ENCODE measurements at regions of chr18 and their contacts with region 1.

Region 1: GRCh38 chr18:839224-840022 is 27.4 kb upstream of the YES1 start:
- DNase-seq: peak; percentile 93
- ATAC-seq: peak; percentile 98
- H3K4me3 Mint-ChIP-seq: no peak overlapping the region
- H3K27ac Mint-ChIP-seq: no peak overlapping the region
- H3K4me1 Mint-ChIP-seq: peaks cover 5% of the 10 kb centered on the region
- H3K27me3 Mint-ChIP-seq: peaks cover 6% of the 10 kb centered on the region

Region 2: DNA sequence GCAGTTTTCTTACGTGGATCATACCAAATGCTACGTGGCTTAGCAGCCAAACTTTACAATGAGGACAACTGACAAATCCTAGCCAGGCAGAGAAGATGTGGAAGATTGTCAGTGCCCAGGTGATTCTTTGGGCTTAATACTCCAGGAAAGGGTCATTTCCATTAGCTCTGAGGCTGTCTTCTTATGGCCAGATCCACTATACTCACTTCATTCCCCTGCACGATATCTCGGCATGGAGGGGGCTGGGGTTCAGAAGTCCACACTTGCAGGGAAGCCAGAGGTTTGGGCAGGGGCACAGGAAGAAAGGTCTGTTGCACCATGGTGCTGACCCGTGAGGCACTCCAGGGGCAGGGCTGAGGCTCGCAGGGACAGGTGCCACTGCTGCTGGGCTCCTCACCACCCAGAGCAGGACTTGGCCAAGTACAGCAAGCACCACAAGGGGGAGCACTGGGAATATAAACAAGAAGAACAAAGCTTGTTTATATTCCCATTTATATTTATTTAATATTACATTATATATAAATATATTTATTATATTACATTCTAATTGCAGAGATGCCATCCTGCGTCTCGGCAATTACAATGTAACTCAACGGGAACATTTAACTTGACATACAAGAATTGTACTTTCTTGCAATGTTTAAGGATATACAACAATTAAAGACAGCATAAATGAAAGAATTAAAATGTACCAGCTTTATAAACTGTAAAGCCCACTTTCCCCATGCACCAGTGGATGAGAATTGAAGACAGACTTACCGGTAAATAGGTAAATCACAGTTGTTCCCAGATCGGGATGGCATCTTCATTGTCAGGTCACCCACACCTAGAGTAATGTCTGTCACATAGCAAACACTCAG is 215.4 kb before region 1 on chr18:
- CTCF ChIA-PET with region 1: interaction called, 104 read pairs
- POLR2A ChIA-PET with region 1: interaction called, 4 read pairs
- DNase-seq: peak; percentile 80
- ATAC-seq: peak; percentile 89
- H3K4me3 Mint-ChIP-seq: no peak overlapping the region
- H3K27ac Mint-ChIP-seq: no peak overlapping the region
- H3K4me1 Mint-ChIP-seq: peaks cover 2% of the 10 kb centered on the region
- H3K27me3 Mint-ChIP-seq: peaks cover 31% of the 10 kb centered on the region

Region 3: GRCh38 chr18:712401-713134 is 126.9 kb before region 1 on chr18 and contains the start of gene ENOSF1:
- CTCF ChIA-PET with region 1: interaction called, 25 read pairs
- POLR2A ChIA-PET with region 1: interaction called, 3 read pairs
- DNase-seq: peak; percentile 88
- ATAC-seq: peak; percentile 89
- H3K4me3 Mint-ChIP-seq: peak within 1 kb of the TSS; percentile 88
- H3K27ac Mint-ChIP-seq: peak within 1 kb of the TSS; percentile 93
- H3K4me1 Mint-ChIP-seq: peaks cover 51% of the 10 kb centered on the region
- H3K27me3 Mint-ChIP-seq: no peaks in the 10 kb centered on the region
- total RNA-seq, gene ENOSF1: 66.0 to 74.1 TPM

Region 4: DNA sequence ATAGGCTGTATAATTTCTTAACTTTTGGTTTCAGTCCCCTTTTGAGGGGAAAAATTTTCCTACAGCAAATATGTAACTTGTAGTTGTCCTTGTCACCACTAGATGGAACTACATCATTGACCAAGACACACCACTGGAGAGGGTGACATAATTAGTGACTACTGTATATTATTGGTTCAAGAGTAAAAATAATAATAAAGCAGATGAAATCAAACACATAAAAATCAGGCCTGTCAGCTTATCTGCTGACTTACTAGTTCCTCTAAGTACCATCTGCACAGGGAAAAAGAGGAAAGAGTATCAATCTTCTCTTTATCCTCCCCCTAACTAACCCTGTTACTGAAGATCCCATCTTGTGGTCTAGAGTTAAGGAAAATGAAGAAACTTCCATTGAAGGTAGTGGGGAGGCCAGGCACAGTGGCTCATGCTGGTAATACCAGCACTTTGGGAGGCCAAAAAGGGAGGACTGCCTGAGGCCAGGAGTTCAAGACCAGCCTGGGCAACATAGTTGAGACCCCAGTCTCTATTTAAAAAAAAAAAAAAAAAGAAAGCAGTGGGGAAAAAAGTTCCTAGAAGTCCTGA is 97.4 kb before region 1 on chr18:
- CTCF ChIA-PET with region 1: interaction called, 219 read pairs
- POLR2A ChIA-PET with region 1: interaction called, 3 read pairs
- DNase-seq: no peak
- ATAC-seq: peak; percentile 68
- H3K4me3 Mint-ChIP-seq: no peak overlapping the region
- H3K27ac Mint-ChIP-seq: no peak overlapping the region
- H3K4me1 Mint-ChIP-seq: peaks cover 1% of the 10 kb centered on the region
- H3K27me3 Mint-ChIP-seq: no peaks in the 10 kb centered on the region

Region 5: GRCh38 chr18:799943-800342 is 39.5 kb before region 1 on chr18:
- CTCF ChIA-PET with region 1: interaction called, 12 read pairs
- POLR2A ChIA-PET with region 1: no interaction called
- DNase-seq: no peak
- ATAC-seq: no peak
- H3K4me3 Mint-ChIP-seq: no peak overlapping the region
- H3K27ac Mint-ChIP-seq: no peak overlapping the region
- H3K4me1 Mint-ChIP-seq: peaks cover 61% of the 10 kb centered on the region
- H3K27me3 Mint-ChIP-seq: no peaks in the 10 kb centered on the region

Region 6: GRCh38 chr18:824179-824578 is 15.2 kb before region 1 on chr18:
- CTCF ChIA-PET with region 1: interaction called, 74 read pairs
- POLR2A ChIA-PET with region 1: no interaction called
- DNase-seq: no peak
- ATAC-seq: no peak
- H3K4me3 Mint-ChIP-seq: no peak overlapping the region
- H3K27ac Mint-ChIP-seq: no peak overlapping the region
- H3K4me1 Mint-ChIP-seq: peaks cover 6% of the 10 kb centered on the region
- H3K27me3 Mint-ChIP-seq: no peaks in the 10 kb centered on the region

Region 7: DNA sequence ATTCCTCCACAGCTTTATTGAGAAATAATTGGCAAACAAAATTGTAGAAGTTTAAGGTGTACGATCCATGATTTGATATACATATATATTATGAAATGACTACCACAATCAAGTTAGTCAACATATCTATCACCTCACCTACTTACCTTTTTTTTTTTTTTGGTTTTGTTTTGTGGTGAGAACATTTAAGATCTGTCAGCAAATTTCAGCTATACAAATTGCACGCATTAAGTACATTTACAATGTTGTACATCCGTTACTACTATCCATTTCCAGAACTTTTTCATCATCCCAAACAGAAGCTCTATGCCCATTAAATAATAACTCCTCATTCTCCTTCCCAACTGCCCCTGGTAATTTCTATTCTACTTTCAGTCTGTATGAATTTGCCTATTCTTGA is 27.8 kb after region 1 on chr18:
- CTCF ChIA-PET with region 1: no interaction called
- POLR2A ChIA-PET with region 1: no interaction called
- DNase-seq: no peak
- ATAC-seq: no peak
- H3K4me3 Mint-ChIP-seq: no peak overlapping the region
- H3K27ac Mint-ChIP-seq: no peak overlapping the region
- H3K4me1 Mint-ChIP-seq: peaks cover 4% of the 10 kb centered on the region
- H3K27me3 Mint-ChIP-seq: peaks cover 13% of the 10 kb centered on the region